Activated CD8-positive, alpha-beta T cell treated with anti-CD3 and anti-CD28 coated beads, Interleukin-2, amount 10 ng/mL, durations not matched to agents 7 days and 5 days (primary cell): ENCODE measurements at regions of chr15 and their contacts with region 1.

Region 1: DNA sequence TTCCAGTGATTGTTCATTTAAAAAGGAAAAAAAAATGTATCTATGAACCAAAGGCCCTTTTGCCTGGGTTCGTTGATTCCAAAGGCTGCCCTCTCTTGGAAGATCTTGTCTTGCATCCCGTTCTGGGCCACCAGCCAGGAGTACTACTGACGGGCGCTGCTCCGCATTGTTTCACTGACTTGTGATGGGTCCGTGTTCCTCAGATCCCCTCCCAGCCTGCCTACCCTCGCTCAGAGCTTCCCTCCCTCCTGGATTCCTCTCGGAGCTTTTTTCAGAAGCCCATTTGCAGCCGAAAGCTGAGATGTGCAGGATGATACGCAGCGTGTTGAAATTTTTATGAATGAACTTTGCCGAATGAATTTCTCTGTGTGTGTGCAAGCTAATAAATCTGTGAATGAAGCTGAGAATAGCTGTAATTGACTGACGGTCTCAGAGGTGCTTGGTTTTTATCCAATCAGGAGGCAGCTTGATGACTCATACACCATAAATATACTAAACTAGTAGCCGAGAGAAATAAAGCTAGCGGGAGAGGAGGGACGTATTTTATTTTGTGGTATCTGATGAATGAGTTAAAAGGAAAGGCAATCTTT is at the start of gene SHC4:
- DNase-seq: peak; percentile 41
- ATAC-seq: peak; percentile 56
- H3K4me3 Mint-ChIP-seq: peak within 1 kb of the TSS; percentile 69
- H3K27ac Mint-ChIP-seq: peak within 1 kb of the TSS; percentile 72
- H3K4me1 Mint-ChIP-seq: peaks cover 56% of the 10 kb centered on the region
- H3K27me3 Mint-ChIP-seq: peaks cover 22% of the 10 kb centered on the region
- total RNA-seq, gene SHC4: 0.65 to 0.66 TPM

Region 2: DNA sequence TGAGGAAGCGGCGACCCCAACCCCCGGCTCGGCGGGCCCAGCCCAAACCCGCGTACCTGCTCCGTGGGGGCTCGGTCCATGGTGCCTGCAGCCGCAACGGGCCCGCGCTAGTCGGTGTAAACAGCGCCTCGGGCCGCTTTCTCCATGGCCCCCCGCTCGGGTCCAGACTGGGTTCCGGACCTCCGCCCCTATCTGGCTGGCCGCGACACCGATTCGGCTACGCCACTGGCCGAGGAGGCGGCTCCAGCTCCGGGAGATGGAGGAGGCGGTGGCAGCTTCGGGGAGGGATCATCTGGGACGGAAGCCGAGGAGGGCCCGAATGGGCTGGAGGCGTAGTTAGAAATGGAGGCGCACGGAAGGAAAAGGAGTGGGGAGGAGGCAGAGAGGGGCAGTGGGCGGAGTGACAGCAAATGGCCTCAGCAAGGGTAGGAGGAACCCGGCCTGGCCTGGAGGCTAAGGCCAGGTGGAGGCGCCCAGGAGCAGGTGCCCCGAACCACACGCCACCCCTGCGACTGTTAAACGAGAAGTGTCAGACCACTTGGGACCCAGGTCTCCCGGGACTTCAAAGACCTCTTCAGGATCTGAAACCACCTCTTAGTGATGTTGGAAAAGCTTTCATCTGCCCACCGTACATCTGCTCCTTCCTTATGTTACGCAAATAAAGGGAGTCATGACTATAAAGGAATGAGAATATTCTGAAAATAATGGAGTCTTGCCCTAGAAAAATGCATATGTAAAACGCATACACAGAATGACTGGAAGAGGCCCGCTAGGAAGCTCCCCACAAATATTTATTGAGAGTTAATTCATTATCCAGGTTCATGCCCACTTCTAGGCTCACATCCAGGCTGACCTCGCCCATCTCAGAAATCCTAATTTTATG is 82.8 kb after region 1 on chr15 and contains the start of gene SECISBP2L:
- CTCF ChIA-PET with region 1: interaction called, 12 read pairs
- POLR2A ChIA-PET with region 1: interaction called, 3 read pairs
- DNase-seq: peak; percentile 94
- ATAC-seq: peak; percentile 95
- H3K4me3 Mint-ChIP-seq: peak within 1 kb of the TSS; percentile 94
- H3K27ac Mint-ChIP-seq: peak within 1 kb of the TSS; percentile 86
- H3K4me1 Mint-ChIP-seq: peaks cover 22% of the 10 kb centered on the region
- H3K27me3 Mint-ChIP-seq: no peaks in the 10 kb centered on the region
- total RNA-seq, gene SECISBP2L: 28.3 to 29.2 TPM

Region 3: GRCh38 chr15:49145651-49146609 is 182.3 kb after region 1 on chr15:
- CTCF ChIA-PET with region 1: interaction called, 25 read pairs
- POLR2A ChIA-PET with region 1: no interaction called
- DNase-seq: peak; percentile 53
- ATAC-seq: peak; percentile 55
- H3K4me3 Mint-ChIP-seq: no peak overlapping the region
- H3K27ac Mint-ChIP-seq: no peak overlapping the region
- H3K4me1 Mint-ChIP-seq: peaks cover 21% of the 10 kb centered on the region
- H3K27me3 Mint-ChIP-seq: no peaks in the 10 kb centered on the region